ENCODE measurements at regions of chr10 and their contacts with region 1.

Region 1: GRCh38 chr10:95246579-95247051 is 44.2 kb downstream of the PDLIM1 start:
- DNase-seq: peak; percentile 74 to 82
- H3K4me3 ChIP-seq: no peak overlapping the region
- H3K4me3 Mint-ChIP-seq: no peak overlapping the region
- H3K27ac Mint-ChIP-seq: peak overlapping the region; percentile 7
- H3K4me1 ChIP-seq: peaks cover 25% of the 10 kb centered on the region
- H3K4me1 Mint-ChIP-seq: peaks cover 29% of the 10 kb centered on the region
- H3K27me3 ChIP-seq: no peaks in the 10 kb centered on the region
- H3K27me3 Mint-ChIP-seq: no peaks in the 10 kb centered on the region
- CTCF ChIP-seq: peak; percentile 77 to 90

Region 2: DNA sequence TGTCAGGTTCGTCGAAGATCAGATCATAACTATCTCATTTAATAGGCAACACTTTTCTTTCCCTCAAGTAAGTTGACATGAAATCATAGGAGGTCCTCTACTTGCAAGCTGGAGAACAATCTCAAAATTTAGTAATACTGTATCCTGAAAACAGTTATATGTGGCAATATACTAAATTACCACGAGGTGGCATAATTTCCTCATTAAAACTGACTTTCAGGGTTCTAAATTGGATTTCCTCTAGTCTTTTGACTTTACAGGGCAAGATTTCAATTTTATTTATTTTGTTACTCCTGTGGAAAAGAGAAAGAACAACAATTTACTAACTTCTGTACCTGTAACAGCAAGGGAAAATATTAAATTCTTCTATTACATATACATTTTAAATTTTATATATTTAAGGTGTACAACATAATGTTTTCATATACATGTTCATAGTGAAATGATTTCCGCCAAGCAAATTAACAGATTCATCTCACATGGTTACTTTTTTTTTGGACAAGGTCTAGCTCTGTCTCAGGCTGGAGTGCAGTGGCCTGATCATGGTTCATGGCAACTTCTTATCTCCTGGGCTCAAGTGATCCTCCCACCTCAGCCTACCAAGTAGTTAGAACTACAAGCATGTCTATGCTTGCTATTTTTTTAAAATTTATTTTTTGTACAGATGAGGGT is 616.5 kb before region 1 on chr10:
- CTCF ChIA-PET with region 1: no interaction called
- POLR2A ChIA-PET with region 1: no interaction called
- intact Hi-C with region 1: loop called (anchors 1 kb)
- DNase-seq: peak in 1 of 2 experiments; percentile 29
- H3K4me3 ChIP-seq: no peak overlapping the region
- H3K4me3 Mint-ChIP-seq: no peak overlapping the region
- H3K27ac Mint-ChIP-seq: peak overlapping the region; percentile 42
- H3K4me1 ChIP-seq: peaks cover 43% of the 10 kb centered on the region
- H3K4me1 Mint-ChIP-seq: peaks cover 20% of the 10 kb centered on the region
- H3K27me3 ChIP-seq: no peaks in the 10 kb centered on the region
- H3K27me3 Mint-ChIP-seq: no peaks in the 10 kb centered on the region
- CTCF ChIP-seq: peak; percentile 55 to 59

Region 3: GRCh38 chr10:95133016-95133752 is 113.4 kb before region 1 on chr10:
- CTCF ChIA-PET with region 1: interaction called, 13 read pairs
- POLR2A ChIA-PET with region 1: no interaction called
- intact Hi-C with region 1: loop called (anchors 1 kb)
- DNase-seq: peak; percentile 86 to 89
- H3K4me3 ChIP-seq: no peak overlapping the region
- H3K4me3 Mint-ChIP-seq: no peak overlapping the region
- H3K27ac Mint-ChIP-seq: peak overlapping the region; percentile 53
- H3K4me1 ChIP-seq: peaks cover 22% of the 10 kb centered on the region
- H3K4me1 Mint-ChIP-seq: peaks cover 22% of the 10 kb centered on the region
- H3K27me3 ChIP-seq: no peaks in the 10 kb centered on the region
- H3K27me3 Mint-ChIP-seq: no peaks in the 10 kb centered on the region
- CTCF ChIP-seq: peak; percentile 77 to 94

Region 4: DNA sequence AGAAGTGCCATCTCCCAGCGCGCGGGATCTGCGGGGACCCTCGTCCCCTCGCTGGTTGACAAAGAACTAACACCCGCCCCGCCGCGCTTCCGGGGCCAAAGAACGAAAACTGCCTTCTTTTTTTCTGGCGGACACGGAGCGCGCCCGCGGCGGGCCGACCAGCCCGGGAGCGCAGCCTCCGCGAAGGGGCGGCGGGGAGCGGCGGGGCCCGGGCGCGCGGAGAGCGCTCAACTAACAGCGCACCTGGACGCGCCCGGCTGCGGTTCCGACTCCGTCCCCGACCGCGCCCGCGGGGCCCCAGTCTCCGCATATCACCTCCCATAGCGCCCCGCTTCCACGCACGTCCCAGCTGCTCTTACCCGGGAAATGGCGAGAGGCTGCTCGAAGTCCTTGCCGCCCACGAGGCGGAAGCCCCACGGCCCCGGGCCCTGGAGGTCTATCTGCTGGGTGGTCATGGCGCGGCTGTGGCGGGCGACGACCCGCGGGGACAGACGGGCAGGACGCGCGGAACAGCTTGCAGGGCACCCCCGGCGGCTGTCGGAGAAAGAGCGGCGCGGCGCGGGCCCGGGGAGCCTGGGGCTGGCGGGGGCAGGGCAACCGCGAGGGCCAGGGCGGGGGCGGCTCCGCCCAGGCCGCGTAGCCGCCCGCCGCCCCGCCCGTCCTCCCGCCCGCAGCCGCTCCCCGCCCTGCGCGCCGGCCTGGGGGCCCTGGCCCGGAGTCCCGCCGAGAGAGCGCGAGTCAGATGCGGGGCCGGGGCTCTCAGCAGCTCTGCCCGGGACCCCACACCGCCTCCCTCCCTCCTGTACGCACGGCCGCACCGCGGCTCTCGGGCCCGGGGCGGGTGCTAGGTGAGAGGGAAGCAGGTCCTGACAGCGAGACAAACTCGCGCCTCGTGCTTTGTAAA is 44.1 kb after region 1 on chr10 and contains the start of gene PDLIM1:
- CTCF ChIA-PET with region 1: interaction called, 8 read pairs
- POLR2A ChIA-PET with region 1: no interaction called
- intact Hi-C with region 1: loop called (anchors 1 kb)
- DNase-seq: peak; percentile 78 to 88
- H3K4me3 ChIP-seq: peak within 1 kb of the TSS; percentile 89
- H3K4me3 Mint-ChIP-seq: peak within 1 kb of the TSS; percentile 82
- H3K27ac Mint-ChIP-seq: peak within 1 kb of the TSS; percentile 87
- H3K4me1 ChIP-seq: peaks cover 43% of the 10 kb centered on the region
- H3K4me1 Mint-ChIP-seq: peaks cover 27% of the 10 kb centered on the region
- H3K27me3 ChIP-seq: no peaks in the 10 kb centered on the region
- H3K27me3 Mint-ChIP-seq: no peaks in the 10 kb centered on the region
- CTCF ChIP-seq: no peak
- total RNA-seq, gene PDLIM1: 417 and 506 TPM in 2 replicates

Region 5: DNA sequence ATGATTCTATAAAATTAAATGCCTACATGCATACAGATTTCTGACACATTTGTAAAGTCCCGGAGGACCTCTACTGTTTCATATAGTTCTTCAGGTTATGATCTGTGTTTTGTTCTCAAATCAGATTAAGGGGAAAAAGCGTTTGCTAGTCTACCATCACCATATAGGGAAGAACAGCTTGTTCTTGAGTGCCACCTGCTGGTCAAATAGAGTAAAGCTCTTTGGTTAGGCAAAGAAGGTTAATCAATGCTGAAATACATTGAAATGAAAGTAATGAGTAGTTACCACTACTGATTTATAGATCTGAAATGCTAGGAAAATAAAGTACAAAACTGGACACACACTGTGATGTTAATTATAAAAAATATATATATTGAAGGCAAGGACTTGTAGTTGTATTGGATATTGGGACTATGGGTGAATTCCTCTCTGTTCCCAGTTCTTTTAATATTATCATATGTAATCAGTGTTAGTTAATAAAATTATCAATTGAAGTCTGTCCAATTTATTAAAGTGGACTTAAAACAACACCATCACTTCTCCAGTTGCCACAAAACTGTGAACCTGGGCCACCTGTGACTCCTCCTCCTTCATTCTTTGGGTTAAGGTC is 116.8 kb after region 1 on chr10:
- CTCF ChIA-PET with region 1: interaction called, 64 read pairs
- POLR2A ChIA-PET with region 1: no interaction called
- intact Hi-C with region 1: loop called (anchors 1 kb)
- DNase-seq: peak; percentile 52 to 74
- H3K4me3 ChIP-seq: no peak overlapping the region
- H3K4me3 Mint-ChIP-seq: no peak overlapping the region
- H3K27ac Mint-ChIP-seq: peak overlapping the region; percentile 31
- H3K4me1 ChIP-seq: peaks cover 37% of the 10 kb centered on the region
- H3K4me1 Mint-ChIP-seq: peaks cover 31% of the 10 kb centered on the region
- H3K27me3 ChIP-seq: no peaks in the 10 kb centered on the region
- H3K27me3 Mint-ChIP-seq: no peaks in the 10 kb centered on the region
- CTCF ChIP-seq: peak; percentile 83 to 91

Measured in Caco-2 (cell line).